ENCODE measurements at regions of chr3 and their contacts with region 1.

Region 1: GRCh38 chr3:188037216-188037718 is 116.7 kb upstream of the LPP start:
- DNase-seq: peak; percentile 83
- ATAC-seq: peak; percentile 83
- H3K4me3 ChIP-seq: peak overlapping the region in 2 of 3 experiments; percentile 14 to 56; a peak in 1 of 6 replicates
- H3K27ac ChIP-seq: peak overlapping the region; percentile 82
- H3K4me1 ChIP-seq: peaks cover 62% of the 10 kb centered on the region
- H3K27me3 ChIP-seq: no peaks in the 10 kb centered on the region
- CTCF ChIP-seq: peak; percentile 79
- EP300 ChIP-seq: peak in 1 of 2 experiments; percentile 42; a peak in 1 of 4 replicates
- POLR2A ChIP-seq: no peak
- RAD21 ChIP-seq: peak; percentile 80

Region 2: DNA sequence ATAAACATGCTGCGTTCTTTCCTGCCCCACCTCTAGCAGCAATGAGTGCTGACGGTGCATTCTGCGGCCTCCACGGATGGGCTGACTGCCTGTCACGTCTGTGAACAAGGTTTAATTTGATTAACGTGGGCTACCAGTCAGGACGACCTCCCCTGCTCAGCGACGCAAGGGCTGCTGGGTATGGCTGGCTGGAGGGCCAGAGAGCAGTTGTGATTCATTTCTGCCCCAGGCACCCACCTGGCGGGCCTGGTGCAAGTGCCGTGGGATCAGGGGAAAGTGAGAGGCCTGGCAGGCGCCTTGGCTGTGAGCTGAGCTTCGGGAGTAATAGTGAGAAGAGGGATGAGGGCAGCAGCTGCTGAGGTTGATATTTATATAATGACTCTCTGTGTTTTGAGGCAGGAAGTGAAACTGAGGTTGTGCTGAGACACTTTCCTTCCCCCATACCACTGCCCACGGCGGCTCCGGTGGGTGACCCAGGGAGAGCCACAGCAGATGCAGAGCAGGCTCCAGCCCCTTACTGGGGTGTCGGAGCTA is 101.6 kb before region 1 on chr3:
- CTCF ChIA-PET with region 1: no interaction called
- POLR2A ChIA-PET with region 1: no interaction called
- in situ Hi-C with region 1: no loop called
- intact Hi-C with region 1: no loop called
- DNase-seq: no peak
- ATAC-seq: no peak
- H3K4me3 ChIP-seq: no peak overlapping the region
- H3K27ac ChIP-seq: no peak overlapping the region
- H3K4me1 ChIP-seq: peaks cover 27% of the 10 kb centered on the region
- H3K27me3 ChIP-seq: peaks cover 0 to 1% of the 10 kb centered on the region in 2 experiments; a peak in 1 of 5 replicates
- CTCF ChIP-seq: no peak
- EP300 ChIP-seq: no peak
- POLR2A ChIP-seq: no peak
- RAD21 ChIP-seq: no peak

Region 3: GRCh38 chr3:187983484-187984124 is 53.7 kb before region 1 on chr3:
- CTCF ChIA-PET with region 1: no interaction called
- POLR2A ChIA-PET with region 1: no interaction called
- in situ Hi-C with region 1: no loop called
- intact Hi-C with region 1: loop called (anchors 2 kb)
- DNase-seq: peak; percentile 93
- ATAC-seq: peak; percentile 92
- H3K4me3 ChIP-seq: peak overlapping the region in 2 of 3 experiments; percentile 15 to 29; a peak in 2 of 6 replicates
- H3K27ac ChIP-seq: peak overlapping the region; percentile 70
- H3K4me1 ChIP-seq: peaks cover 62% of the 10 kb centered on the region
- H3K27me3 ChIP-seq: no peaks in the 10 kb centered on the region
- CTCF ChIP-seq: peak; percentile 56
- EP300 ChIP-seq: peak; percentile 38 to 60; a peak in 3 of 4 replicates
- POLR2A ChIP-seq: no peak
- RAD21 ChIP-seq: peak; percentile 32; the same call in 1 of the 2 replicates

Region 4: DNA sequence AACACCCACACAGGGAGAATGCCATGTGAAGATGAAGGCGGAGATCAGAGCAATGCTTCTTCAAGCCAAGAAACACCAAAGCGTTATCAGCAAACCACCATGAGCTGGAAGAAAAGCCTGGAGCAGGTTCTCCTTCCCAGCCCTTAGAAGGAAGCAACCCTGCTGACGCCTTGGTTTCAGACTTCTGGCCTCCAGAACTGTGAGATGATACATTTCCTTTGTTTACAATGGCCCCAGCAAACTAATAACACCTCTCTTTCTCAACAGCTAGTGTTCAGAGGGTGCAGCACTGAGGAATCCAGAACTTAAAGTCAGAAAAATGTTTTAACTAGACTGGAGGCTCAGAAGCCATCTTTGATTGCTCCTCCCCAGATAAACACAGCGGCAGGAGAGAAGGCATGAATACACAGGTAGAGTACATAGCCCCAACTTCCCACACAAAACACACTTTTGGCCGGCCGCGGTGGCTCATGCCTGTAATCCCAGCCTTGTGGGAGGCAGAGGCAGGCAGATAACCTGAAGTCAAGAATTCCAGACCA is 15.7 kb before region 1 on chr3:
- CTCF ChIA-PET with region 1: no interaction called
- POLR2A ChIA-PET with region 1: interaction called, 4 read pairs
- in situ Hi-C with region 1: no loop called
- intact Hi-C with region 1: loop called (anchors 1 kb)
- DNase-seq: peak; percentile 85
- ATAC-seq: peak; percentile 86
- H3K4me3 ChIP-seq: peak overlapping the region in 1 of 3 experiments; percentile 14; a peak in 1 of 6 replicates
- H3K27ac ChIP-seq: peak overlapping the region; percentile 78
- H3K4me1 ChIP-seq: peaks cover 60% of the 10 kb centered on the region
- H3K27me3 ChIP-seq: no peaks in the 10 kb centered on the region
- CTCF ChIP-seq: no peak
- EP300 ChIP-seq: peak in 1 of 2 experiments; percentile 95; a peak in 2 of 4 replicates
- POLR2A ChIP-seq: no peak
- RAD21 ChIP-seq: no peak

Region 5: DNA sequence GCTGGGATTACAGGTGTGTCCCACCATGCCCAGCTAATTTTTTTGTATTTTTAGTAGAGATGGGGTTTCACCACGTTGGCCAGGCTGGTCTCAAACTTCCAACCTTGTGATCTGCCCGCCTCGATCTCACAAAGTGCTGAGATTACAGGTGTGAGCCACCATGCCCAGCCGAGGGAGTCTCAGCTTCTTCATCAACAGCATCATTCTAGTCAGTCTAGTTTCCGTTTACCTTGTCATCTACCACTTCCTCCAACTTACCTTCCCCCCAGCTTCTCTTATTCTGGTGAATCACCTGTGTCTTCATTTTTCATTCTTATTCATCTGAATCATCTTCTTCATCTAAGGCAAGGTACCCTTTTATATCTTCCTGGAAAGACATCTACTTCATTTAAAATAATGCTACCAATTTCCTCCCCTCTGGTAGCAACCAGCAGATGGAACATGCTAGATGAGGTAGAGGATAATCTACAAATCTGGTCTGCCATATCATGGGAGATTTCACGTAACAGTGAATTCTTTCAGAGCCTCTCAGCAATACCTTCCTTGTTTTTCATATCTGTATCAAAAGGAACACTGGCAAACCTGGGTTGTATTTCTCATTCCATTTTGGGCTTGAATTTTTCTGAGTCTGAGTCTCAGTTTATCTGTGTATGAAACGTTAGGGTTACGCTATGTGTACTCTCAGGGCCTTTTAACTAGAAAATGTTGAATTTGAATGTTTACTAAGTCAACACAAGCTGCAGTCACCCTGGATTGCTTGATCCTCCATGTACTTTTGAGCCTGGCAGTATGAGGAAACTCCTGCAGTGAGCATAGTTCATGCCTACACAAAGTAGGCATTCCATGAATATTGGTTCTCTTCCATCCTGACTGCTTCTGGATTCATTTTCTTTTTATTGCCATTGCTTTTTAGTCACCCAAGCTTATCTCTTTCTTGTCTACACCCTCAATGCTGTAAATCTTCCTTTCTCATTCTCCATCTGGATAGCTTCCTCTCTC is 133.5 kb after region 1 on chr3:
- CTCF ChIA-PET with region 1: interaction called, 5 read pairs
- POLR2A ChIA-PET with region 1: no interaction called
- in situ Hi-C with region 1: no loop called
- intact Hi-C with region 1: loop called (anchors 5 kb)
- DNase-seq: peak; percentile 98
- ATAC-seq: peak; percentile 98
- H3K4me3 ChIP-seq: peak overlapping the region in 2 of 3 experiments; percentile 19 to 36; a peak in 3 of 6 replicates
- H3K27ac ChIP-seq: peak overlapping the region; percentile 83
- H3K4me1 ChIP-seq: peaks cover 96% of the 10 kb centered on the region
- H3K27me3 ChIP-seq: no peaks in the 10 kb centered on the region
- CTCF ChIP-seq: no peak
- EP300 ChIP-seq: peak; percentile 77 to 98; a peak in 3 of 4 replicates
- POLR2A ChIP-seq: no peak
- RAD21 ChIP-seq: no peak

Region 6: DNA sequence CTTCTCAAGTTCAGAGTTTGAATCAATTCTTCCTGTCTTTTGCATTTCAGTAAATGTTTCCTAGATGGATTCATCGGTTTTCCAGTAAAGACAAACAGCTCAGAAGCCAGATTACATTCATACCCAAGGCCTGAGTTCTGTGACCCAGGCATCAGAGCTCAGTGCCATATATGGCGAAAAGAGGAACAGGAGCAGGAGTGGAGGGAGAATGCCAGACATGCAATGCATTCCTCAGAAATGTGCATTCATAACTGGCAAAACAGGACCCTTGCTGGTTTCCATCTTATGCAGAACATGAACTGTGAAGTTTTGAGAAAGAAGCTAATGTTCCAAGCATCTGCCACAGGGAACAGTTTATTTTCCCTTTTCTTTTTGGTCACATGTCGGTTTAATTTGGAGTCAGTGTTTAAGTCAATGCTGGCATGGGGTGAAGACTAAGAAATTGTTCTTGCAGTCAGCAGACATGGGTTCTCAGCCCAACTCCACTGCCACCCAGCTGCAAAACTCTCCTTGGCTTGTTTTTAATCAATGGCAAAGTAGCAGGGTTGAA is 233.2 kb after region 1 on chr3:
- CTCF ChIA-PET with region 1: no interaction called
- POLR2A ChIA-PET with region 1: no interaction called
- in situ Hi-C with region 1: no loop called
- intact Hi-C with region 1: loop called (anchors 2 kb)
- DNase-seq: peak; percentile 89
- ATAC-seq: peak; percentile 95
- H3K4me3 ChIP-seq: no peak overlapping the region
- H3K27ac ChIP-seq: no peak overlapping the region
- H3K4me1 ChIP-seq: peaks cover 84% of the 10 kb centered on the region
- H3K27me3 ChIP-seq: no peaks in the 10 kb centered on the region
- CTCF ChIP-seq: no peak
- EP300 ChIP-seq: peak in 1 of 2 experiments; percentile 73; a peak in 2 of 4 replicates
- POLR2A ChIP-seq: no peak
- RAD21 ChIP-seq: no peak

Region 7: GRCh38 chr3:188749010-188749617 is 711.8 kb after region 1 on chr3:
- CTCF ChIA-PET with region 1: no interaction called
- POLR2A ChIA-PET with region 1: no interaction called
- in situ Hi-C with region 1: no loop called
- intact Hi-C with region 1: loop called (anchors 1 kb)
- DNase-seq: no peak
- ATAC-seq: no peak
- H3K4me3 ChIP-seq: no peak overlapping the region
- H3K27ac ChIP-seq: peak overlapping the region; percentile 99
- H3K4me1 ChIP-seq: peaks cover 61% of the 10 kb centered on the region
- H3K27me3 ChIP-seq: no peaks in the 10 kb centered on the region
- CTCF ChIP-seq: no peak
- EP300 ChIP-seq: no peak
- POLR2A ChIP-seq: no peak
- RAD21 ChIP-seq: no peak

Region 8: DNA sequence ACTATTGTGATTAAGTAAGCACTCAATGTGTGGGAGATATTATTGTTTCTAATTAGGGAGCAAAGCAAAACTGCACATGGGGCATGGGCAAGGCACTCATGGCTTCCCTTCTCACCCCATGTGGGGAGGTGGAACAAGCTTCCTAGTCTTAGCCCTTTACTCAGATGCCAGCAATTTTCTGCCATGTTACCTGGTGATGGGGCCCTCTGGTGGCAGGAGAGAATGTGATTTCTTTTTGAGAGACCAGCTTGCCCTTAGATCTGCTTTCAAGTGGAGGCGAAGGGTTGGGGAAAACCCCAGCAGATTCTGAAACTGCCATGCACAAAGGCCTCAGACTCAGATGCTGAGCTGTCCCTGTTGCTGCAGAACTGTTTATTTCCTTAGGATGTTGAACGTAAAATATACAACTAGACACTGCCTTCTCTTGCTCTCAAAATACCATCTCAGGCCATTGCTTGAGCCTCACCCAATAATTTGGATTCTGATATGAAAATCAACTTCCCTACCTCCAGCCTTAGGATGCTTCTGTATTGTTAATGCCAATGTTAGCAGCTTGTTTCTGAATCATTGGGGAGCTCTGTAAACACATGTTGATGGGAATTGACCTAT is 1004.3 kb after region 1 on chr3:
- CTCF ChIA-PET with region 1: no interaction called
- POLR2A ChIA-PET with region 1: no interaction called
- in situ Hi-C with region 1: no loop called
- intact Hi-C with region 1: loop called (anchors 10 kb)
- DNase-seq: peak; percentile 58
- ATAC-seq: peak; percentile 85
- H3K4me3 ChIP-seq: no peak overlapping the region
- H3K27ac ChIP-seq: no peak overlapping the region
- H3K4me1 ChIP-seq: peaks cover 15% of the 10 kb centered on the region
- H3K27me3 ChIP-seq: no peaks in the 10 kb centered on the region; a peak in 1 of 5 replicates
- CTCF ChIP-seq: peak; percentile 62
- EP300 ChIP-seq: no peak
- POLR2A ChIP-seq: no peak
- RAD21 ChIP-seq: no peak

Measured in HepG2 (cell line).